Gastrocnemius medialis (tissue), 4 donors: ENCODE measurements at regions of chr7 and their contacts with region 1.

Region 1: DNA sequence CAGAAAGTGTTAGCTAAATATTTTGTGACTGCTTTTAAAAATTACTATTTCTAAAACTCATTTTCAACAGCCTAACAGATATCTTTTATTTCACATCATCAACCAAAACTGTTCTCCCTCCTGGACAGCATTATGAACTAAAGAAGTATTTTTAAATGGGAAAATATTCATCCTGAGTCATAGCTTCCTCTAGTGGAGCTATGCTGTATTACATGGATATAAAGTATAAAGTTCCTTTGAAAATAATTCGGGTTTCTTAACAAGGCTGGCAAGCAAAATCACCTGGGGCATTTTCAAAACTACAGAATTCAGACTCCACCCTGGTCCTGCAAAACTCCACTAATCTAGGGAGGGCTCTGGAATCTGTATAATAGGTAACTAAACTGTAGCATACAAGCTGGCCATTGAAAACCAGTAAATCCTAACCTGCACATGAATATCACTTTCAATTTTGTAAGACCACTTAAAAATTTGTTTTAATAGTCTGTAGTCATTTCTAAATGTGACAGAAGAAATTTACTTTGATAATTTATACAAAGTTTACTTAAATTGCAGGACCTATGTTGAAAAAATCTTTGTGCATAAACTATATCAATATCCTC is 53.5 kb downstream of the SCIN start:
- DNase-seq: no peak
- ATAC-seq: no peak
- H3K4me3 ChIP-seq: no peak overlapping the region
- H3K27ac ChIP-seq: no peak overlapping the region
- H3K4me1 ChIP-seq: no peaks in the 10 kb centered on the region
- H3K27me3 ChIP-seq: no peaks in the 10 kb centered on the region
- CTCF ChIP-seq: peak; percentile 37 to 60 (median 44)
- POLR2A ChIP-seq: no peak

Region 2: GRCh38 chr7:11988186-11988585 is 635.8 kb before region 1 on chr7:
- in situ Hi-C with region 1: no loop called
- intact Hi-C with region 1: no loop called
- DNase-seq: no peak
- ATAC-seq: no peak
- H3K4me3 ChIP-seq: no peak overlapping the region
- H3K27ac ChIP-seq: no peak overlapping the region
- H3K4me1 ChIP-seq: no peaks in the 10 kb centered on the region
- H3K27me3 ChIP-seq: no peaks in the 10 kb centered on the region
- CTCF ChIP-seq: no peak
- POLR2A ChIP-seq: no peak

Region 3: GRCh38 chr7:12524794-12525386 is 99.1 kb before region 1 on chr7:
- in situ Hi-C with region 1: loop called in 2 of 4 experiments (anchors 10 kb)
- intact Hi-C with region 1: no loop called
- DNase-seq: no peak
- ATAC-seq: no peak
- H3K4me3 ChIP-seq: no peak overlapping the region
- H3K27ac ChIP-seq: no peak overlapping the region
- H3K4me1 ChIP-seq: no peaks in the 10 kb centered on the region
- H3K27me3 ChIP-seq: no peaks in the 10 kb centered on the region
- CTCF ChIP-seq: peak in 3 of 5 experiments; percentile 45 to 56 (median 52)
- POLR2A ChIP-seq: no peak

Region 4: GRCh38 chr7:12741951-12742575 is 118.1 kb after region 1 on chr7:
- in situ Hi-C with region 1: no loop called
- intact Hi-C with region 1: no loop called
- DNase-seq: no peak
- ATAC-seq: no peak
- H3K4me3 ChIP-seq: no peak overlapping the region
- H3K27ac ChIP-seq: no peak overlapping the region
- H3K4me1 ChIP-seq: peaks cover 3 to 11% of the 10 kb centered on the region in 2 donors
- H3K27me3 ChIP-seq: no peaks in the 10 kb centered on the region
- CTCF ChIP-seq: no peak
- POLR2A ChIP-seq: no peak